BJ (cell line): ENCODE measurements at regions of chr2 and their contacts with region 1.

Region 1: GRCh38 chr2:227890495-227891079 is 19.2 kb downstream of the DAW1 start:
- DNase-seq: no peak
- H3K4me3 ChIP-seq: no peak overlapping the region
- H3K27me3 ChIP-seq: no peaks in the 10 kb centered on the region; the same call in 1 of the 2 replicates
- CTCF ChIP-seq: peak; percentile 42

Region 2: DNA sequence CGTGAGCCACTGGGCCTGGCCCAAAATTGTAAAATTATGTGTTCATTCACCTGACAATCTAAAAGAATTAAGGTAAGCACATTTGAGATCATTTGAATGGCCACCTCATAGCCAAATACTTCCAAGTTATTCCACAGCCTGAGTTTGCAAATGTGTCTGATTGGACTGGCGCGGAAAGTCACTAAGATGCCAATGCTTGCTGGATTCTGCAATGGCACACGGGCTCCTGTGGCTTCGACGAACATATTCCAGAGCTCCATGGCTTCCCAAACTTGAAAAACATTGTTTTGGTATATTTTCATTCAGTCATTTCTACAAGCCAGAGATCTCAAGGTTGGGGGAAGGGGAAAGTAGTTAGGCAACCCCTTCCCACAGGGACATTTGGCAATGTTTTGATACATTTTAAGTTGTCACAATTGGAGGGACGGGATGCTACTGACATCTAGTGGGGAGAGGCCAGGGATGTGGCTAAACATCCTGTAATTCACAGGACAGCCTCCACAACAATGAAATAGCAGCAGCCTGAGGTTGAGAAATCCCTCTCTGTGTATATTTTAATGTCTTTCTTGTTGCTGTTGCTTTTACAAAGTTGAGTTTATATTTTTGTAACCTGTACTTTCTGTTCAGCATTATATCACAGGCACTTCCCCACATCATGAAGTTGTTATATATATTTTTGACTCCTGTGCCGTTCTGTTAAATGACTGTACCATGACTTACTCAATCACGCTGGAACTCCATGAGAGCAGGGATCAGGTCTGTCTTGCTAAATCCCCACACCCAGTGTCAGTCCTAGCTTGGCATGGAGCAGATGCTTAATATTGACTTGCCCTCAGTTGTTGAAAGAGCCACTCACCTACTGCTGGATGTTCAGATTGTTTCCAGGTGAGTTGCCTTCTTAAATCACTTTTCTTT is 783.5 kb before region 1 on chr2:
- CTCF ChIA-PET with region 1: no interaction called
- POLR2A ChIA-PET with region 1: no interaction called
- DNase-seq: peak; percentile 11
- H3K4me3 ChIP-seq: no peak overlapping the region
- H3K27me3 ChIP-seq: no peaks in the 10 kb centered on the region
- CTCF ChIP-seq: peak; percentile 85

Region 3: GRCh38 chr2:227657199-227657845 is 233.3 kb before region 1 on chr2:
- CTCF ChIA-PET with region 1: interaction called, 10 read pairs
- POLR2A ChIA-PET with region 1: no interaction called
- DNase-seq: no peak
- H3K4me3 ChIP-seq: no peak overlapping the region
- H3K27me3 ChIP-seq: no peaks in the 10 kb centered on the region
- CTCF ChIP-seq: no peak

Region 4: DNA sequence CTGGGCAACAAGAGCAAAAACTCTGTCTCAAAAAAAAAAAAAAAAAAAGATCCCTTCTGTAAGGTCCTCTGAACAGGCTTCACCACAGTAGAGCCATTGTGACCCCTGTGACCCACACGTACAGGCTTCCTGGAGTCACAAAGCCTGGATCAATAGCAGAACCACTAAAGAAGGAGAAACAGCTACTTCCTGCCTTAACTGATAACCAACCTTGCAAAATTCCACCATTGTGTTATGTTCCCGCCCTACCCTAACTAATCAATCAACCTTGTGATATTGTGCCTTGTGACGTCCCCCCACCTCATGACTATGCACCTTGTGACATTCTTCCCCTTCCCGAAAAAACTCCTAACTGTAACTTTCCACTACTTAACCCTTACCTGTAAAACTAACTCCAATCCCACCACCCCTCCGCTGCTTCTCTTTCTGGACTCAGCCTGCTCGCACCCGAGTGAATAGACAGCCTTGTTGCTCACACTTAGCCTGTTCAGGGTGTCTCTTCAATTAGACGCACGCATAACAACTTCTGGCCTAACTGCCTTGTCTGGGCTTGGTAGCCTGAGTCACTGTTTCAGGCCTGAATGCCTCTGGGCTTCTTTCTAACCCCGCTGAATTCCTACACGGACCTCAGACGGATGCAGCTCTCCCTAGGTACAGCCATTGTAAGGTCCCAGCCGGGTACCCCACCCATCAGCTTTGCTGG is 131.0 kb before region 1 on chr2:
- CTCF ChIA-PET with region 1: no interaction called
- POLR2A ChIA-PET with region 1: no interaction called
- DNase-seq: no peak
- H3K4me3 ChIP-seq: no peak overlapping the region
- H3K27me3 ChIP-seq: no peaks in the 10 kb centered on the region
- CTCF ChIP-seq: no peak

Region 5: DNA sequence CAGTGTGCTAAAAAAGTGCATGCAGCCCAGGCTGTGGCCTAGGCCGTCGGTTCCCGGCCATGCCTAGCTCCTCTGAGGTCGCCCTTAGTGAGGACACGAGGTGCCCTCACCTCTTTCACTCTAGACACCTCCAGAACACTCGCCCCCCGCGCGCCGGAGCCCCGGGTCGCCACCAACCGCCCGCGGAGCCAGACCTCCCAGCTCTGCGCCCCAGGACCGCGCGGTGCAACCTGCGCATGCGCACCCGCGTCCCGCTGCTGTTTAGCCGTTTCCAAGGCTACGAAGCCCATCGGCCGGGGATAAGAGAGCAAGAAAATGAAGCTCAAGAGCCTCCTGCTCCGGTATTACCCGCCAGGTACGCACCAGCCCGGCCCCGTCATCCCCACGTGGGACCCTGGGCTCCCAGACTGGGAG is 19.2 kb before region 1 on chr2 and contains the start of gene DAW1:
- CTCF ChIA-PET with region 1: interaction called, 15 read pairs
- POLR2A ChIA-PET with region 1: no interaction called
- DNase-seq: no peak
- H3K4me3 ChIP-seq: peak within 1 kb of the TSS; percentile 39
- H3K27me3 ChIP-seq: no peaks in the 10 kb centered on the region
- CTCF ChIP-seq: no peak
- polyA plus RNA-seq, gene DAW1: 0.10 TPM in 1 of 2 replicates, not detected in the other

Region 6: DNA sequence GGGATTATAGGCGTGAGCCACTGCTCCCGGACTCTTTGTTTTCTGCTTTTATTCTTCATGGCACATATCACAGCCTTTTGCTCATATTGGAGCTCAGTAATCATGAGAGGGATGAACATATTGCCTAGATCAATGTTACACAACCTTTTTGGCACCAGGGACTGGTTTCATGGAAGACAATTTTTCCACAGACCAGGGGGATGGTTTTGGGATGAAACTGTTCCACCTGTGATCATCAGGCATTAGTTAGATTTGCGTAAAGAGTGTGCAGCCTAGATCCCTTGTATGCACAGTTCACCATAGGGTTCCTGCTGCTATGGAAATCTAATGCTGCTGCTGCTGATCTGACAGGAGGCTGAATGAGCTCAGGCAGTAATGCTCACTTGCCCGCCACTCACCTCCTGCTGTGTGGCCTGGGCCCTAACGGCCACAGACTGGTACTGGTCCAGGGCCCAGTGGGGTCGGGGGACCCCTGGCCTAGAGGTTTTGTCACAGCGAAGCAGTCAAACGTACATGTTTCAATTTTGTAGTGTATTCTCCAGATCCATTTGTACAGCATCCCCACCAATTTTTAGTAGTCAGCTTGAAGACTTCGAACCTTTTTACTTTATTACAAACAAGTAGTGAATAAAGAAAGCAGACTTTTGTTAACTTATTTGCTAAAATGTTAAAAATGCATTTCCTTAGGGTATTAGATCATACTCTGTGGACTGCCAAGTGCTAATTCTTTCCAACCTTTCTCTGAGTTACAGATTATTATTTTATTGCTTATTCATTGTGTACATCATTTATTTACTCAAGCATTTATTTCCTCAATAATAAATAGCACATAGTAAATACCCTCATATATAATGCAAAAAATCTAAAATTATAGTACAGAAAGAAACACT is 12.9 kb before region 1 on chr2:
- CTCF ChIA-PET with region 1: interaction called, 15 read pairs
- POLR2A ChIA-PET with region 1: no interaction called
- DNase-seq: no peak
- H3K4me3 ChIP-seq: no peak overlapping the region
- H3K27me3 ChIP-seq: no peaks in the 10 kb centered on the region
- CTCF ChIP-seq: no peak

Region 7: DNA sequence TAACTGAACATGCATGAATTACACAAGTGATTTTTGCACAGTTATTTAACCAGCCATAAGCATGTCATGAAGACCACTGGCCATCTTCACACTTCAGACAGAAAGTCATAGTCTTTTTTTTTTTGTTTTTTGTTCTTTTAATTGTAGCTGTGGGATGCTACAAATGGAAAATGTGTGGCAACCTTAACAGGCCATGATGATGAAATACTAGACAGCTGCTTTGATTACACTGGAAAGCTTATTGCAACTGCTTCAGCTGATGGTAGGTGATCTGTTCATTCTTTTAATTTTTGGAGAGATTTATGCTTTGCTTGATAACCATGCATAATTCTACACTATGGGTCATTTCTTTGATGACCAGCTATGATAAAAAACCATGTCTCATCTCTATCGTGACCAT is 16.4 kb after region 1 on chr2:
- CTCF ChIA-PET with region 1: interaction called, 27 read pairs
- POLR2A ChIA-PET with region 1: no interaction called
- DNase-seq: no peak
- H3K4me3 ChIP-seq: no peak overlapping the region
- H3K27me3 ChIP-seq: no peaks in the 10 kb centered on the region
- CTCF ChIP-seq: no peak